Right lobe of liver (tissue), 6 donors: ENCODE measurements at regions of chr20 and their contacts with region 1.

Region 1: DNA sequence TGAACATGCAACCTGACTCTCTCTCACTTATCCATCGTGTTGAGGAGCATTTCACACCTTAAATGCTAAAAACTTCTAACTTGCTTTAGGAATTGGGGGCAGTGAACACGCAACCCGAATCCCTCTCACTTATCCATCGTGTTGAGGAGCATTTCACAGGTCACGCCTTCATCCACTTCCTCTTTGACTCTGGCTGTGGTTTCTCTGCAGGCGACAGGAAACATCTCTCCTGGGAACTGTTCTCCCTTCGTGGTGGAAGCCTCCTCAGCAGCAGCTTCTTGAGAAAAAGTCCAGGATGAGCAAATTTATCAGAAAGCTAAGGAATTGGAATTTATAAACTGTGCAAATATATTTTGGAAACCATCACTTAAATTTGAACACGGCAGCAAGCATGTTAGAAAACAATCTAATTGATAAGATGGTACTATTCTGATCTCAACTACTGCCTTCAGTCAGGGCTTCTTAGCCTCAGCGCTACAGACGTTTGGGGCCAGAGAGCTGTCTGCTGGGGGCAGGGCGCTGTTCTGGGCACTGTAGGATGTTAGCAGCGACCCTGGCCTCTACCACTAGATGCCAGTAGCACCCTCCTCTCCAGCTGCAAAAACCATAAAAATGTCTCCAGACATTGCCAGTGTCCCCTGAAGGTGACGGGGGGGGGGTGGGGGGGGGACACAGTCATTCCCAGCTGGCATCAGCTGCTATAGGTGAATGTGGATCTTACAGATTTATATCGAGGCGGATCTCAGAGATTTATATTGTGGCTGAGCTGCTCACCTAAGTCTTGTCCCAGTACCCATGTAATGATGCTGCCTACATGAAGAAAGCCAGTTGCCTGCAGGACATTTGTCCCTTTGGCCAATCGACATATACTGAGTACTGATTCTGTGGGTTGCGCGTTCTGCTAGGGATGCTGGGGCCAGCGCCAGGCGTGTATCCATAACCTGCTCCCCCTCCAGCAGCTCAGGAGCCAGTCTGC is 26.2 kb downstream of the CTCFL start:
- DNase-seq: no peak
- ATAC-seq: peak; percentile 64 to 77 (median 64)
- H3K4me3 ChIP-seq: no peak overlapping the region
- H3K27ac ChIP-seq: no peak overlapping the region
- H3K4me1 ChIP-seq: peaks cover 0 to 6% (median 3%) of the 10 kb centered on the region in 4 donors
- H3K27me3 ChIP-seq: no peaks in the 10 kb centered on the region
- CTCF ChIP-seq: peak in 3 of 4 donors; percentile 25 to 45 (median 35)
- POLR2A ChIP-seq: no peak

Region 2: DNA sequence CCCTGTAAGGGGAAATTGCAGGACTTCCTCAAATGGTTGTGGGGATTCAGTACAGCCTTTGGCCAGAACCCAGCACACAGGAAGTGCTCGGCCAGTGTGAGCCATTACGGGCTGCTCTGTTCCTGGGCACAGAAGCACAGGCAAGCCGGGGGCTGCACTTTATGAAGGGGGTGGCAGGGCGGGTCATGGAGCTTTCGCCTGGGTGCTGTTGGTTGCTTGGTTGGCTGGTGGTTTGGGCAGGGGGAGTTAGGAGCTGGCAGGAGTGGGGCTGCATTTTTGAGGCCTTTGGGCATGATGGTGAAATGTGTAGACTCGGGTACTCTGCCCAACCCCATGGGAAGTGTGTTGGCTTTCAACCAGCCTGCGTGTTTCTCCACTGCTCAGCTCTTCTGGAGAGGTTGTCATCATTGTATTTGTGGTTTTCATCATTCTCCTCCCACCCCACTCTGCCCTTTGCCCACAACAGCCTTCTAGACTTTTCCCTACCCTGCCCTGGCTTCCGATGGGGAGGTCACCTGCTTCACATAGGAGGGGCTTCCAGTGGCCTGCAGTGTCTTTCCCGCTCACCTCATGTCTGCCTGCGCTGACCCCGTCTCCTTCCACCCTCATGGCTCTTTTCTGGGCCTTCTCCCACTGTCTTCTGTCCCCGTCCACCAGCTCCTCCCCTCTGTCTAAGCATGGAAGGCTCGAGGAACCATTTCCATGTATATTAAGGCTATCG is 123.6 kb before region 1 on chr20:
- intact Hi-C with region 1: loop called (anchors 5 kb)
- DNase-seq: peak in 1 of 3 donors; percentile 68
- ATAC-seq: peak; percentile 66 to 74 (median 69)
- H3K4me3 ChIP-seq: no peak overlapping the region
- H3K27ac ChIP-seq: peak overlapping the region in 1 of 3 donors; percentile 47
- H3K4me1 ChIP-seq: no peaks in the 10 kb centered on the region
- H3K27me3 ChIP-seq: no peaks in the 10 kb centered on the region
- CTCF ChIP-seq: no peak
- POLR2A ChIP-seq: no peak

Region 3: GRCh38 chr20:57383447-57384347 is 115.0 kb before region 1 on chr20:
- intact Hi-C with region 1: loop called (anchors 5 kb)
- DNase-seq: no peak
- ATAC-seq: no peak
- H3K4me3 ChIP-seq: no peak overlapping the region
- H3K27ac ChIP-seq: no peak overlapping the region
- H3K4me1 ChIP-seq: no peaks in the 10 kb centered on the region
- H3K27me3 ChIP-seq: no peaks in the 10 kb centered on the region
- CTCF ChIP-seq: no peak
- POLR2A ChIP-seq: no peak

Region 4: GRCh38 chr20:57594092-57594911 is 95.6 kb after region 1 on chr20:
- intact Hi-C with region 1: no loop called
- DNase-seq: peak in 2 of 3 donors; percentile 62 to 66
- ATAC-seq: peak; percentile 1 to 23 (median 10)
- H3K4me3 ChIP-seq: no peak overlapping the region
- H3K27ac ChIP-seq: peak overlapping the region in 2 of 3 donors; percentile 96 to 98
- H3K4me1 ChIP-seq: peaks cover 0 to 48% (median 23%) of the 10 kb centered on the region in 4 donors
- H3K27me3 ChIP-seq: no peaks in the 10 kb centered on the region
- CTCF ChIP-seq: peak; percentile 68 to 93 (median 87)
- POLR2A ChIP-seq: no peak

Region 5: GRCh38 chr20:57622579-57623377 is 124.1 kb after region 1 on chr20:
- intact Hi-C with region 1: no loop called
- DNase-seq: peak in 1 of 3 donors; percentile 56
- ATAC-seq: peak; percentile 56 to 77 (median 70)
- H3K4me3 ChIP-seq: no peak overlapping the region
- H3K27ac ChIP-seq: no peak overlapping the region
- H3K4me1 ChIP-seq: no peaks in the 10 kb centered on the region
- H3K27me3 ChIP-seq: no peaks in the 10 kb centered on the region
- CTCF ChIP-seq: peak; percentile 55 to 69 (median 60)
- POLR2A ChIP-seq: no peak